HepG2 (cell line): ENCODE measurements at regions of chr20 and their contacts with region 1.

Region 1: GRCh38 chr20:47356526-47357295 is at the start of gene ZMYND8:
- DNase-seq: peak; percentile 99
- ATAC-seq: peak; percentile 43
- H3K4me3 ChIP-seq: peak within 1 kb of the TSS; percentile 72 to 81 (median 73)
- H3K27ac ChIP-seq: peak within 1 kb of the TSS; percentile 99
- H3K4me1 ChIP-seq: peaks cover 78% of the 10 kb centered on the region
- H3K27me3 ChIP-seq: no peaks in the 10 kb centered on the region; a peak in 1 of 5 replicates
- CTCF ChIP-seq: no peak
- EP300 ChIP-seq: 0 out of 4 replicates have a peak, but pooled peaks of 1 of the 2 experiments have one; percentile 21
- POLR2A ChIP-seq: peak; percentile 66 to 84
- RAD21 ChIP-seq: no peak; the same call in 1 of the 2 replicates
- total RNA-seq, gene ZMYND8: 53.9 and 71.9 TPM in 2 replicates

Region 2: DNA sequence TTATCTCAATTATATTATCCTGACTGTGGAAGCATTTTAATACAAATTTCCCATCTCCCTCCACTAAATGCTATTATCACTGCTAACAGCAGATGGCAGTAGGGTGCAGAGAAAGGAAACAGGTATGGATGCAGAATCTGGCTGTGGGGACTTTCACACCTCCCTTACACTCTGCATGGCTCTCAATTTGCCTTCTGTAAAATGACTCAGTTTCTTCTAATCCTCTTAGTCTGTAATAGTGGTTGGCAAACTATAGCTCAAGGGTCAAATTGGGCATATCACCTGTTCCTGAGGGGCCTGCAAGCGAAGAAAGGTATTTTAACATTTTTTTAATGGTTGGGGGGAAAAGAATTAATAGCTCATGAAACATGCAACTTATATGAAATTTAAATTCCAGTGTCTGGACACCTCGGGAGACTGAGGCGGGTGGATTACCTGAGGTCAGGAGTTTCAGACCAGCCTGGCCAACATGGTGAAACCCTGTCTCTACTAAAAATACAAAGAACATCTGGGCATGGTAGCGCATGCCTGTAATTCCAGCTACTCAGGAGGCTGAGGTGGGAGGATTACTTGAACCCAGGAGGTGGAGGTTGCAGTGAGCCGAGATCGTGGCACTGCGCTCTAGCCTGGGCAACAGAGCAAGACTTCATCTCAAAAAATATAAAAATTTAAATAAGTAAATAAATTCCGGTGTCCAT is 83.7 kb before region 1 on chr20:
- CTCF ChIA-PET with region 1: no interaction called
- POLR2A ChIA-PET with region 1: interaction called, 76 read pairs
- in situ Hi-C with region 1: no loop called
- intact Hi-C with region 1: no loop called
- DNase-seq: peak; percentile 78
- ATAC-seq: peak; percentile 63
- H3K4me3 ChIP-seq: no peak overlapping the region
- H3K27ac ChIP-seq: no peak overlapping the region
- H3K4me1 ChIP-seq: peaks cover 23% of the 10 kb centered on the region
- H3K27me3 ChIP-seq: no peaks in the 10 kb centered on the region
- CTCF ChIP-seq: peak; percentile 91
- EP300 ChIP-seq: no peak
- POLR2A ChIP-seq: no peak
- RAD21 ChIP-seq: peak; percentile 86

Region 3: DNA sequence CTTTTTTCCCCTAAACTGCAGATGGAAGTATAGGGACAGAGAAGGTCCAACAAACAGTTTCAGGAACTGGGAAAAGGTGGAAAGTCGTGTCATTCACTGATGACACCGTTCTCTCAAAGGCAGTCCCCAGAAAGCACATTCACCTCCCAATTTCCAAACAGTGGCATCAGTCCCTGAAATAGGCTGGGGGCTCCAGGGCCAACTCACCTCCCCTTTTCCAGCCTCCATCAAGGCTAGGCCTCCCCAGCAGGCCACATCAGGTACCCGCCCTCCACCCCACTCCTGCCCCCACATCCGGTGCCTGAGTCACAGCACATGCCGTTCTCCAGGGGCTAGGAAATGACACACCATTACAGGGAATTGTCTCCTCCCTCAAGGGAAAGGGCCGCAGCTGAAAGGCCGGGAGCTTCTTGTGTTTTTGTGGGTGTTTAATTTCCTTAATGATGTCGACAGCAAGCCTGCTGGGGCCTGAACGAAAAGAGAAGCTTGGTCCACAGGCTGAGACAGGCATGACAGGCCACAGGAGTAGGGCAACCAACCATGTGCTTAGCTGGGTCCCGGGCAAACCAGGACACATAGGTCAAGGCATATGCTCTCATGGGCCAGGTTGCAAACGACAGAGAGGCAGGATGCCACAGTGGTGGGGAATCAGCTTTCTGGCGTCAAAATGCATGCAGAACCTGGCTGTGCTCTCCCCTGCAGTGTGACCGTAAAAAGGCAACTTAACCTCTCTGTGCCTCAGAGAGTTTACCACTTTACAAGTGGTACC is 39.4 kb before region 1 on chr20:
- CTCF ChIA-PET with region 1: no interaction called
- POLR2A ChIA-PET with region 1: interaction called, 624 read pairs
- in situ Hi-C with region 1: no loop called
- intact Hi-C with region 1: loop called (anchors 1 kb)
- DNase-seq: peak; percentile 56
- ATAC-seq: no peak
- H3K4me3 ChIP-seq: peak overlapping the region in 1 of 3 experiments; percentile 55; a peak in 1 of 6 replicates
- H3K27ac ChIP-seq: peak overlapping the region; percentile 82
- H3K4me1 ChIP-seq: peaks cover 100% of the 10 kb centered on the region
- H3K27me3 ChIP-seq: no peaks in the 10 kb centered on the region
- CTCF ChIP-seq: no peak
- EP300 ChIP-seq: no peak
- POLR2A ChIP-seq: peak in 1 of 2 experiments; percentile 45; a peak in 1 of 4 replicates
- RAD21 ChIP-seq: no peak

Region 4: GRCh38 chr20:47370850-47371676 is 14.4 kb after region 1 on chr20:
- CTCF ChIA-PET with region 1: no interaction called
- POLR2A ChIA-PET with region 1: interaction called, 264 read pairs
- in situ Hi-C with region 1: no loop called
- intact Hi-C with region 1: loop called (anchors 2 kb)
- DNase-seq: peak; percentile 70
- ATAC-seq: peak; percentile 89
- H3K4me3 ChIP-seq: peak overlapping the region; percentile 3 to 51 (median 49); a peak in 5 of 6 replicates
- H3K27ac ChIP-seq: peak overlapping the region; percentile 36
- H3K4me1 ChIP-seq: peaks cover 42% of the 10 kb centered on the region
- H3K27me3 ChIP-seq: no peaks in the 10 kb centered on the region
- CTCF ChIP-seq: no peak
- EP300 ChIP-seq: no peak
- POLR2A ChIP-seq: peak in 1 of 2 experiments; percentile 51; a peak in 2 of 4 replicates
- RAD21 ChIP-seq: 0 out of 2 replicates have a peak, but pooled peaks have one; percentile 7

Region 5: GRCh38 chr20:47397652-47398301 is 41.1 kb after region 1 on chr20:
- CTCF ChIA-PET with region 1: no interaction called
- POLR2A ChIA-PET with region 1: interaction called, 28 read pairs
- in situ Hi-C with region 1: no loop called
- intact Hi-C with region 1: no loop called
- DNase-seq: no peak
- ATAC-seq: no peak
- H3K4me3 ChIP-seq: no peak overlapping the region
- H3K27ac ChIP-seq: peak overlapping the region; percentile 41
- H3K4me1 ChIP-seq: peaks cover 34% of the 10 kb centered on the region
- H3K27me3 ChIP-seq: no peaks in the 10 kb centered on the region
- CTCF ChIP-seq: no peak
- EP300 ChIP-seq: no peak
- POLR2A ChIP-seq: no peak
- RAD21 ChIP-seq: no peak